ENCODE measurements at regions of chr3 and their contacts with region 1.

Region 1: GRCh38 chr3:135141160-135141559 is 346.1 kb downstream of the EPHB1 start:
- DNase-seq: no peak
- H3K4me3 ChIP-seq: no peak overlapping the region
- H3K4me3 Mint-ChIP-seq: no peak overlapping the region
- H3K27ac Mint-ChIP-seq: no peak overlapping the region
- H3K4me1 ChIP-seq: no peaks in the 10 kb centered on the region
- H3K4me1 Mint-ChIP-seq: no peaks in the 10 kb centered on the region
- H3K27me3 ChIP-seq: no peaks in the 10 kb centered on the region
- H3K27me3 Mint-ChIP-seq: peaks cover 6% of the 10 kb centered on the region
- CTCF ChIP-seq: no peak

Region 2: GRCh38 chr3:135034291-135034768 is 106.8 kb before region 1 on chr3:
- CTCF ChIA-PET with region 1: no interaction called
- POLR2A ChIA-PET with region 1: no interaction called
- intact Hi-C with region 1: no loop called
- DNase-seq: peak; percentile 34 to 67
- H3K4me3 ChIP-seq: no peak overlapping the region
- H3K4me3 Mint-ChIP-seq: no peak overlapping the region
- H3K27ac Mint-ChIP-seq: no peak overlapping the region
- H3K4me1 ChIP-seq: peaks cover 8% of the 10 kb centered on the region; the same call in 1 of the 2 replicates
- H3K4me1 Mint-ChIP-seq: no peaks in the 10 kb centered on the region
- H3K27me3 ChIP-seq: no peaks in the 10 kb centered on the region
- H3K27me3 Mint-ChIP-seq: peaks cover 2% of the 10 kb centered on the region
- CTCF ChIP-seq: no peak

Region 3: GRCh38 chr3:135301670-135302069 is 160.5 kb after region 1 on chr3:
- CTCF ChIA-PET with region 1: no interaction called
- POLR2A ChIA-PET with region 1: no interaction called
- intact Hi-C with region 1: no loop called
- DNase-seq: no peak
- H3K4me3 ChIP-seq: no peak overlapping the region
- H3K4me3 Mint-ChIP-seq: no peak overlapping the region
- H3K27ac Mint-ChIP-seq: no peak overlapping the region
- H3K4me1 ChIP-seq: no peaks in the 10 kb centered on the region
- H3K4me1 Mint-ChIP-seq: no peaks in the 10 kb centered on the region
- H3K27me3 ChIP-seq: no peaks in the 10 kb centered on the region
- H3K27me3 Mint-ChIP-seq: peaks cover 5% of the 10 kb centered on the region
- CTCF ChIP-seq: no peak

Region 4: GRCh38 chr3:136396916-136397315 is 1255.8 kb after region 1 on chr3:
- CTCF ChIA-PET with region 1: no interaction called
- POLR2A ChIA-PET with region 1: interaction called, 14 read pairs
- intact Hi-C with region 1: no loop called
- DNase-seq: no peak
- H3K4me3 ChIP-seq: no peak overlapping the region
- H3K4me3 Mint-ChIP-seq: no peak overlapping the region
- H3K27ac Mint-ChIP-seq: no peak overlapping the region
- H3K4me1 ChIP-seq: no peaks in the 10 kb centered on the region
- H3K4me1 Mint-ChIP-seq: no peaks in the 10 kb centered on the region
- H3K27me3 ChIP-seq: no peaks in the 10 kb centered on the region
- H3K27me3 Mint-ChIP-seq: no peaks in the 10 kb centered on the region
- CTCF ChIP-seq: no peak

Measured in Caco-2 (cell line).